CD8-positive, alpha-beta T cell (primary cell): ENCODE measurements at regions of chr11 and their contacts with region 1.

Region 1: DNA sequence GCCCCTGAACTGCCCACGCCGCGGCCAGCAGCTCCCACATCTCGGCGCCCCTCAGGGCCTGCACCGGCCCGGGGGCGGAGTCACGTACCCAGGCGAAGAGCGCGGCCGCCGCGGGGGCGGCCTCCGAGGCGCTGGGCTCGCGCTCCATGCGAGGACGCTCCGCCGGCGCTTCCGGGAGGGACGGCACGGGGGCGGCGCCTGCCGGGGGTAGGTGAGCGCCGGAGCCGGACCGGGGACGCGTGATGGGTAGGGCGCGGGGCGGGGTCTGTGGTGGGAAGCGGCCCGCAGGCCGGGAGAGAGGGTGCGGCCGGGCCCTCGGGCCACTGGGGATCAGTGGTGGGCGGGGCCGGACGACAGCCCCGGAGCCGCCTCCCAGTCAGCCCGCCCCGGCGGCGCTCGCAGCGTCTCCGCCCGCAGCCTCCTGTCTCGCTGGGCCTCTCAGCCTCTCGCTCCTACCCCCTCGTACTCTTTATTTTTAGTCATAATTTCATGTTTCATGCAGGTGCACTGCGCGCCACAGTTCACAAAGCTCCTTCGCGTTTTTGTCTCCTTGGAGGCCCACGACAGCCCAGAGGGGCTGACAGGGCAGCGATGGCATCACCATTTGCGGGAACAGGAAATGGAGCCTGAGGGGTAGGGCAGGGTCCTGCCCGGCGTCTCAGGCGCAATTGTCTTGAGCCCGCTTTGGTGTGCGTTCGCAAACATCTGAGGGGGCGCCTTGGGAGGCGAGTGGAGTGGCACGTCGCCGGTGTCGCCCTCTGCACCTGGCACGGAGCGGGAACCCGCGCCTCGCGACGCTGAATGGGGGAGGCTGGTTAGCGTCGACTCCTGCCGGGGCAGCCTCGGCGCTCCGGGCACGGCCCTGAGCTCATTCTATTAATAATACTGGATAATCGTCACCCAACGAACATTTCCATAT is at the start of gene SERGEF:
- DNase-seq: peak; percentile 80 to 97 (median 93)
- ATAC-seq: peak; percentile 82
- H3K4me3 ChIP-seq: peak within 1 kb of the TSS; percentile 94 to 99
- H3K4me3 Mint-ChIP-seq: peak within 1 kb of the TSS; percentile 99
- H3K27ac ChIP-seq: peak within 1 kb of the TSS; percentile 90
- H3K27ac Mint-ChIP-seq: peak within 1 kb of the TSS; percentile 97
- H3K4me1 ChIP-seq: peaks cover 16% of the 10 kb centered on the region
- H3K4me1 Mint-ChIP-seq: peaks cover 32% of the 10 kb centered on the region
- H3K27me3 ChIP-seq: no peaks in the 10 kb centered on the region
- H3K27me3 Mint-ChIP-seq: no peaks in the 10 kb centered on the region
- CTCF ChIP-seq: peak; percentile 8
- total RNA-seq, gene SERGEF: 36.6 to 44.7 TPM

Region 2: DNA sequence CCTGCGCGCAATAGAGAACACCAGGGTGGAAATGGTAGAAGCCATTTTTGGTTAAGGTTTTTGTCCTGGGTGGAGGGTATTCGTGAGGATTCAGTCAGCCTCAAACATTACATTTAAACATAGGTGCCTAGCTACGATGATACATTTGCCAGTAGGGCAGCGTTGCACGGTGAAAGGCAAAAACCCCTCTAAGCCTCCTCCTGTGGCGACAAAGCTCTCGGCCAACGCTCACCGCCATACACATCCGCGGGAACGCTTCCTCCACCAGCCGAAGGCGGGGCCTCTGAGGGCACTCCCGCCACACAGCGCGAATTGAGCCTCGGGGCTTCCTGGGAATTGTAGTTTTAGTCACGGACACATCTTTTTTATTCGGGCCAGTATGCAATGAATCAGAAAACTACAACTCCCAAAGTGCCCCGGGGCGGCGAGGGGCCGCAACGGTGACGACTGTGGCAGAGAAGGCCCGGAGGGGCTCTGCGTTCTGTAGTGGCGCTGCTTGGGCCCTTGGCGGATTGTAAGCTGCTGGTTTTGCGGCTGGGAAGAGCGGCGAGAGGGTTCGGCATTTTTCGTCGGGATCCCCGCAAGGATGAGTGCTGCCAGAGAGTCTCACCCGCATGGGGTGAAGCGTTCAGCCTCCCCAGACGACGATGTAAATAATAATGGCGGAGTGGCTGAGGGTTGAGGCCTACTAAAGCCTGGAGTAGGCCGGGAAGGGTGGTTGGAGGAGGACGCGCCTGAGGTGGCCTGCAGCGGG is 1274.8 kb before region 1 on chr11 and contains the start of gene C11orf58:
- CTCF ChIA-PET with region 1: no interaction called
- POLR2A ChIA-PET with region 1: no interaction called
- intact Hi-C with region 1: loop called (anchors 1 to 2 kb)
- DNase-seq: peak; percentile 85 to 98 (median 96)
- ATAC-seq: peak; percentile 95
- H3K4me3 ChIP-seq: peak within 1 kb of the TSS; percentile 93 to 95
- H3K4me3 Mint-ChIP-seq: peak within 1 kb of the TSS; percentile 63
- H3K27ac ChIP-seq: peak within 1 kb of the TSS; percentile 99 to 100
- H3K27ac Mint-ChIP-seq: no peak within 1 kb of the TSS
- H3K4me1 ChIP-seq: peaks cover 35% of the 10 kb centered on the region
- H3K4me1 Mint-ChIP-seq: peaks cover 25% of the 10 kb centered on the region
- H3K27me3 ChIP-seq: no peaks in the 10 kb centered on the region
- H3K27me3 Mint-ChIP-seq: no peaks in the 10 kb centered on the region
- CTCF ChIP-seq: no peak
- total RNA-seq, gene C11orf58: 148 to 157 TPM

Region 3: DNA sequence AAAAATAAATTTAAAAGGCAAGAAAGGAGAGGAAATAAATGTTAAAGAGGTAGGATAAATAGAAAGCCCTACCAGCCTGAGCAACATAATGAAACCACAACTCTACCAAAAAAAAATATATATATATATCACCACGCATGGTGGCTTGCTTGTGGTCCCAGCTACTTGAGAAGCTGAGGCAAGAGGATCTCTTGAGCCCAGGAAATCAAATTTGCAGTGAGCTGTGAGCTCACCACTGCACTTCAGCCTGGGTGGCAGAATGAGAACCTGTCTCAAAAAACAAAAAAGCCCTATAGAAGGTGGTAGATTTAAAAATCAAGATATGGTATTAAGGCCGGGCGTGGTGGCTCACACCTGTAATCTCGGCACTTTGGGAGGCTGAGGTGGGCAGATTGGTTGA is 726.1 kb before region 1 on chr11:
- CTCF ChIA-PET with region 1: no interaction called
- POLR2A ChIA-PET with region 1: no interaction called
- intact Hi-C with region 1: loop called in 1 of 2 experiments (anchors 5 kb)
- DNase-seq: peak in 3 of 9 experiments; percentile 40 to 72 (median 45)
- ATAC-seq: peak; percentile 19
- H3K4me3 ChIP-seq: no peak overlapping the region
- H3K4me3 Mint-ChIP-seq: peak overlapping the region; percentile 47
- H3K27ac ChIP-seq: peak overlapping the region; percentile 26 to 64
- H3K27ac Mint-ChIP-seq: peak overlapping the region; percentile 94
- H3K4me1 ChIP-seq: peaks cover 56% of the 10 kb centered on the region
- H3K4me1 Mint-ChIP-seq: peaks cover 65% of the 10 kb centered on the region
- H3K27me3 ChIP-seq: no peaks in the 10 kb centered on the region
- H3K27me3 Mint-ChIP-seq: no peaks in the 10 kb centered on the region
- CTCF ChIP-seq: no peak

Region 4: DNA sequence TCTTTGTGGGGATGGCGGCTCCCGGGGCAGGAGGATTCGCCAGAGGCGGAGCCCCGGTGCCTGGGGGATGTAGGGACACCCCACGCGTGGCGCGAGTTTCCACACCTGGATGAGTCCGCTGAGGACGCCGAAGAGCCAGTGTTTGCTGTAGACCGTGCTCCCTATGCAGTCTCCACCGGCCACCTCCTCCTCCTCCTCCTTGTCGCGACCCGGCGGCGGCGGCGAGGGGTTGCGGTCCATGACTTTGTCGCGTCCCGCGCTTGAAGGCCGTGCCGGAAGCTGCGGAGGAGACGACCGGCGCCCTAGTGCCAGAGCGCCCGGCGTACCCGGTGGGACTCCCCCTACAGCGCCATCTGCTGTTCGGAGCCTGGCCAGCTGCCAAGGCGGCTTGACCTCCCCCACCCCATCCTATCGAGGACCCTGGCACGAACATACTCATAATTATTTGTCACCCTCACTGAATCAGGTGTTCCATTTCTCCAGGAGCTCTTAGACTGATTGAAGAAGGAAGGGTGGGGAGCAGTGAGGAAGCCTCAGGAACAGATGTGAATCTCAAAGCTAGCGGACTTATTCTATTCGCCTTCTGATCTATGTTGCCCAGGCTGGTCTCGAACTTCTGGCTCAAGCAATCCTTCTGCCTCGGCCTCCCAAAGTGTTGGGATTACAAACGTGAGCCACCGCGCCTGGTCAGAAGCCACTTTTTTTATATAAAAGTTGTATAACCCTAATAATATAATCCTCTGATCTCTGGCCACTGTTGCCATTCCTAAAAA is 92.9 kb after region 1 on chr11 and contains the start of gene SAAL1:
- CTCF ChIA-PET with region 1: interaction called, 9 read pairs
- POLR2A ChIA-PET with region 1: interaction called, 7 read pairs
- intact Hi-C with region 1: loop called (anchors 1 kb)
- DNase-seq: peak; percentile 73 to 93 (median 91)
- ATAC-seq: peak; percentile 97
- H3K4me3 ChIP-seq: peak within 1 kb of the TSS; percentile 75 to 99
- H3K4me3 Mint-ChIP-seq: peak within 1 kb of the TSS; percentile 86
- H3K27ac ChIP-seq: peak within 1 kb of the TSS; percentile 61 to 62
- H3K27ac Mint-ChIP-seq: peak within 1 kb of the TSS; percentile 87
- H3K4me1 ChIP-seq: peaks cover 10% of the 10 kb centered on the region
- H3K4me1 Mint-ChIP-seq: peaks cover 40% of the 10 kb centered on the region
- H3K27me3 ChIP-seq: no peaks in the 10 kb centered on the region
- H3K27me3 Mint-ChIP-seq: peaks cover 14% of the 10 kb centered on the region
- CTCF ChIP-seq: peak; percentile 86
- total RNA-seq, gene SAAL1: 23.8 to 28.2 TPM

Region 5: GRCh38 chr11:18526521-18527296 is 513.6 kb after region 1 on chr11 and contains the start of gene TSG101:
- CTCF ChIA-PET with region 1: no interaction called
- POLR2A ChIA-PET with region 1: no interaction called
- intact Hi-C with region 1: loop called (anchors 2 to 10 kb)
- DNase-seq: peak; percentile 84 to 96 (median 95)
- ATAC-seq: peak; percentile 78
- H3K4me3 ChIP-seq: peak within 1 kb of the TSS; percentile 83 to 90
- H3K4me3 Mint-ChIP-seq: peak within 1 kb of the TSS; percentile 100
- H3K27ac ChIP-seq: peak within 1 kb of the TSS; percentile 97 to 99
- H3K27ac Mint-ChIP-seq: peak within 1 kb of the TSS; percentile 100
- H3K4me1 ChIP-seq: peaks cover 23% of the 10 kb centered on the region
- H3K4me1 Mint-ChIP-seq: peaks cover 54% of the 10 kb centered on the region
- H3K27me3 ChIP-seq: no peaks in the 10 kb centered on the region
- H3K27me3 Mint-ChIP-seq: no peaks in the 10 kb centered on the region
- CTCF ChIP-seq: no peak
- total RNA-seq, gene TSG101: 36.2 to 36.5 TPM

Region 6: DNA sequence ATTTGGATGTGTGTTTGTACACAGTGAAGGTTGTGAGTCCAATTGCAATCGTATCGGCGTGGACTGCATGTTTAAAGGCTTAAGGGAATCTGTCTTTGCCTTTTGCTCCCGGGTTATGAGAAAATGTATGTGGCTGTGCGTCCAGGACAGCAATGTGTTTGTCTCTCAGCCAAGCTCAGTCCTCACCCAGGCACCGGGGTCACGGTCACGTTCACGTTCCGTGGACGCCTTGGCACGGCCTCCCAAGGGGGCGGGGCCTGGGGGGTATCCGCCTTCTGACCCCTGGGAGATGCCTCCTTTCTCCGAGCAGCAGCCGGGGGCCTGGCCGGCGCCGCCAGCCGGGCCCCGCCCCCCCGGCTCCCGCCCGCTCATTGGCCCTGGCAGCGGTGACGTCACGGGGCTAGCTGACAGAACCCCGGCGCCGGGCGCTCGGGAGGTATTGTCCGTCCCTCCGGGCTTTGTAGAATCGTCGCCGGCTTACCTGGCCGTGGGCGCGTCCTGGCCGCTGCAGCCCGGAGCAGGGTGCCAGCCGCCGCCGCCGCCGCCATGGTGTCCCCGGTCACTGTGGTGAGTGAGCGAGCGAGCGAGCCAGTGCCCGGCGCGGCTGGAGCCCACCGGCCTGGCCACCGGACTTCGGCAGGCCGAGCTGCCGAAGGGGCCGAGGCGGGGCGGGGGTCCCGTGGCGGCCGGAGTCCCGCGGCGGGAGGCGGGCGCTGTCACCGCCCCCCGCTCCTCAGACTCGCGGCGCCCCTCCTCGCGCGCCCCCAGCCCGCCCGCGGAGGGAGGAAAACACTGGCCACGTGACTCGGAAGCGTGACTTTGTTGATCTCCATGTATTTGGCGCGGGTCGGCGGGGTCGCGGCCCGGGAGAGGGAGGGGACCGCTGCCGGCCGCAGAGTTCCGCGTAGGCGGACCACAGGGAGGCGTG is 685.5 kb after region 1 on chr11 and contains the start of gene TMEM86A:
- CTCF ChIA-PET with region 1: no interaction called
- POLR2A ChIA-PET with region 1: no interaction called
- intact Hi-C with region 1: loop called in 1 of 2 experiments (anchors 2 kb)
- DNase-seq: peak; percentile 80 to 95 (median 90)
- ATAC-seq: peak; percentile 94
- H3K4me3 ChIP-seq: peak within 1 kb of the TSS; percentile 58 to 67
- H3K4me3 Mint-ChIP-seq: peak within 1 kb of the TSS; percentile 84
- H3K27ac ChIP-seq: peak within 1 kb of the TSS; percentile 48 to 51
- H3K27ac Mint-ChIP-seq: peak within 1 kb of the TSS; percentile 86
- H3K4me1 ChIP-seq: peaks cover 10% of the 10 kb centered on the region
- H3K4me1 Mint-ChIP-seq: peaks cover 17% of the 10 kb centered on the region
- H3K27me3 ChIP-seq: no peaks in the 10 kb centered on the region
- H3K27me3 Mint-ChIP-seq: no peaks in the 10 kb centered on the region
- CTCF ChIP-seq: no peak
- total RNA-seq, gene TMEM86A: 5.2 to 6.1 TPM

Region 7: DNA sequence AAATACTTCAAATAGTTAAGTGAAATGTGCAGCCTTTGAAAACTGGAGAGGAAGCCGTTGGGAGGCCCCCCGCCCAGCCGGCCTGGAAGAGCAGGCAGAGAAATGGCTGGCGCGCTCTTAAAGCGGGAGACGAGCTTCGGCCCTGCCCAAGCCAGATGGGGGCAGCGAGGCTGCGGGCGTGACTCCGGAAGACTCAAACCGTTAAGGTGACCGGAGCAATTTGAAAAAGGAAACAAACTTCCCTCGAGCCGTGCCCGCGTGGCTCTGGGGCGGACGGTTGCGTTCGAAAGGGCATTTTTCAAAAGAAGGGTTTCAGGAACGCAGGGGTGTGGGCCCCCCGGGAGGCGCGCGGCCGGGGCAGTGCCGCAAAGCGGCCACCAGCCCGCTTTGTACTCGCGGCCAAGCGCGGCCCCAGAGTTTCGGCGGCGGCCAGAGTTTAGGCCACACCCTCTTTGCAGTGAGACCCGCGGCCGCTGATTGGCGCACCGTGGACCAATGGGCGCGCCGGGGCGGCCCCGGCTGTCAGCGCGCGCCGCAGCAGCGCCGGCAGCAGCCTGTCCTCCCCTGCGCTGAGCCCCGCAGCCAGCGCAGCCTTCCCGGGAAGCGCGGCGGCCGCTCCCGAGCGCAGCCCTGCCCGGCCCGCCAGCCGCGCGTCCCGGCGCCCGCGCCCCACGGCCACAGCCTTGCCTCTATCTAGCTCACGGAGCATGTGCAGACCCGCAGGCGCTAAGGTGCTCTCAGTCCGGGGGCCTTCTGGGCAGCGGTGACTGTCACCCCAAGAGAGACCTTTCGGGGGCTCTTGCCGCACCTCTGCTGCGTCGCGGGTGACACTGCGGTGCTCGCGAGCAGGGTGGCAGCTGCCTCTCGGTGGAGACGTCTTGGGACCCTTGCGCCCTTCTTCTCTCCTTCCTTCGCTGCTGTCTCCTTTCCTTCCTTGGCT is 1699.4 kb after region 1 on chr11 and contains the start of gene NAV2:
- CTCF ChIA-PET with region 1: no interaction called
- POLR2A ChIA-PET with region 1: no interaction called
- intact Hi-C with region 1: loop called in 1 of 2 experiments (anchors 5 kb)
- DNase-seq: peak; percentile 43 to 88 (median 68)
- ATAC-seq: peak; percentile 97
- H3K4me3 ChIP-seq: peak within 1 kb of the TSS; percentile 67 to 86
- H3K4me3 Mint-ChIP-seq: peak within 1 kb of the TSS; percentile 90
- H3K27ac ChIP-seq: peak within 1 kb of the TSS; percentile 43 to 61
- H3K27ac Mint-ChIP-seq: peak within 1 kb of the TSS; percentile 90
- H3K4me1 ChIP-seq: peaks cover 20% of the 10 kb centered on the region
- H3K4me1 Mint-ChIP-seq: peaks cover 26% of the 10 kb centered on the region
- H3K27me3 ChIP-seq: peaks cover 15 to 19% of the 10 kb centered on the region in 2 experiments
- H3K27me3 Mint-ChIP-seq: peaks cover 33% of the 10 kb centered on the region
- CTCF ChIP-seq: no peak
- total RNA-seq, gene NAV2: 0.39 to 1.3 TPM